ENCODE measurements at regions of chr4 and their contacts with region 1.

Region 1: GRCh38 chr4:11428899-11429698 is 405 bp upstream of the HS3ST1 start:
- DNase-seq: peak; percentile 95
- H3K4me3 Mint-ChIP-seq: peak overlapping the region; percentile 92
- H3K27ac Mint-ChIP-seq: peak overlapping the region; percentile 92
- H3K4me1 Mint-ChIP-seq: peaks cover 16% of the 10 kb centered on the region
- H3K27me3 Mint-ChIP-seq: no peaks in the 10 kb centered on the region
- CTCF ChIP-seq: peak; percentile 66

Region 2: GRCh38 chr4:10554694-10555093 is 874.4 kb before region 1 on chr4:
- CTCF ChIA-PET with region 1: no interaction called
- intact Hi-C with region 1: loop called (anchors 10 kb)
- DNase-seq: peak; percentile 39
- H3K4me3 Mint-ChIP-seq: no peak overlapping the region
- H3K27ac Mint-ChIP-seq: no peak overlapping the region
- H3K4me1 Mint-ChIP-seq: peaks cover 8% of the 10 kb centered on the region
- H3K27me3 Mint-ChIP-seq: no peaks in the 10 kb centered on the region
- CTCF ChIP-seq: peak; percentile 39

Region 3: DNA sequence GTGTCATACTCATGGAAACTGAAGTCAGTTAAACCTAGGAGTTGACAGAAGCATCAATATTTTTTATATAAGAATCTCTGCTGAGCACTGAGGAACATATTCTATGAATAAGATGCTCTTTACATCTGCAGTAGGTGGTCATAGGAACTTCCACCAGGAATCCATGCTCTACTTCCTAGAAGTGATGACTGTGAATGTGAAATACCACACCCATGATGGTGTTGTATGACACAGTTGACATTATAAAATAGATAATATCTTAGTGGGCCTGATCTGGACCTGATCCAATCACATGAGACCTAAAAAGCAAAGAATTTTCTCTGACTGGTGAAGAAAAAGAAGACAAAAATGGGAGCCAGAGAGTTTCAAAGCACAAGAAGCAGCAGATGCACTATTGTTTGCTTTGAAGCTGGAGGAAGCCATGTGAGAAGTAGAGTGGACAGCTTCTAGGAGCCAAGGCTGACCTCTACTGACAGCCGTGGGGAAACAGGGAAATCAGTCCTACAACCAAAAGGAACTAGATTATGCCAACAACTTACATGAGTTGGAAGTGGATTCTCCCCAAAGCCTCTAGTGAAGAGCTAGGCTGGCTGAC is 68.2 kb after region 1 on chr4:
- CTCF ChIA-PET with region 1: interaction called, 5 read pairs
- intact Hi-C with region 1: loop called (anchors 2 kb)
- DNase-seq: peak; percentile 42
- H3K4me3 Mint-ChIP-seq: no peak overlapping the region
- H3K27ac Mint-ChIP-seq: peak overlapping the region; percentile 93
- H3K4me1 Mint-ChIP-seq: peaks cover 55% of the 10 kb centered on the region
- H3K27me3 Mint-ChIP-seq: no peaks in the 10 kb centered on the region
- CTCF ChIP-seq: no peak

Region 4: DNA sequence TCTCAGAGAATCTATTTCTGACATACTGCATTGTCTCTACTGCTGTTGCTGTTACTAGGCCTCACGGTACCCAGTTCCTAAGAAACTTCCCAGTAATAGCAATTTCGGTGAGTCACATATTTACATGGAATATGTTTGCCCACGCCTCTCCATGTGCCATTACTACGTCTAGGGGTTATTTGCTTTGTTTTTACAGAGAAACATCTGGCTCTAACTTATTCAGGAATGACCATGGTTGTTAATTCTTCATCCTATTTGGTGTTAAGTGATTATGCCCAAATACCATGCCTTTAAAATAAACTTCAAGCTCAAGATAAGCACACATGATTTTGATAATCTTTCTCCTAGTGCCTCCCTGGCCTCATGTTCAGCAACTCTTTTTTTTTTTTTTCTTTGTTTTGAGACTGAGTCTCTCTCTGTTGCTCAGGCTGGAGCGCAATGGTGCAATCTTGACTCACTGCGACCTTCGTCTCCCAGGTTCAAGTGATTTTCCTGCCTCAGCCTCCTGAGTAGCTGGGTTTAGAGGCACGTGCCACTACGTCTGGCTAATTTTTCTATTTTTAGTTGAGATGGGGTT is 100.6 kb after region 1 on chr4:
- CTCF ChIA-PET with region 1: no interaction called
- intact Hi-C with region 1: no loop called
- DNase-seq: no peak
- H3K4me3 Mint-ChIP-seq: no peak overlapping the region
- H3K27ac Mint-ChIP-seq: peak overlapping the region; percentile 27
- H3K4me1 Mint-ChIP-seq: peaks cover 28% of the 10 kb centered on the region
- H3K27me3 Mint-ChIP-seq: no peaks in the 10 kb centered on the region
- CTCF ChIP-seq: no peak

Region 5: GRCh38 chr4:11548597-11549082 is 119.5 kb after region 1 on chr4:
- CTCF ChIA-PET with region 1: no interaction called
- intact Hi-C with region 1: loop called (anchors 2 kb)
- DNase-seq: peak; percentile 37
- H3K4me3 Mint-ChIP-seq: peak overlapping the region; percentile 1
- H3K27ac Mint-ChIP-seq: peak overlapping the region; percentile 93
- H3K4me1 Mint-ChIP-seq: peaks cover 60% of the 10 kb centered on the region
- H3K27me3 Mint-ChIP-seq: no peaks in the 10 kb centered on the region
- CTCF ChIP-seq: no peak

Region 6: GRCh38 chr4:11720292-11720691 is 291.2 kb after region 1 on chr4:
- CTCF ChIA-PET with region 1: interaction called, 3 read pairs
- intact Hi-C with region 1: loop called (anchors 5 kb)
- DNase-seq: peak; percentile 40
- H3K4me3 Mint-ChIP-seq: no peak overlapping the region
- H3K27ac Mint-ChIP-seq: peak overlapping the region; percentile 70
- H3K4me1 Mint-ChIP-seq: peaks cover 32% of the 10 kb centered on the region
- H3K27me3 Mint-ChIP-seq: no peaks in the 10 kb centered on the region
- CTCF ChIP-seq: peak; percentile 48